GM23248 (cell line): ENCODE measurements at regions of chr11 and their contacts with region 1.

Region 1: DNA sequence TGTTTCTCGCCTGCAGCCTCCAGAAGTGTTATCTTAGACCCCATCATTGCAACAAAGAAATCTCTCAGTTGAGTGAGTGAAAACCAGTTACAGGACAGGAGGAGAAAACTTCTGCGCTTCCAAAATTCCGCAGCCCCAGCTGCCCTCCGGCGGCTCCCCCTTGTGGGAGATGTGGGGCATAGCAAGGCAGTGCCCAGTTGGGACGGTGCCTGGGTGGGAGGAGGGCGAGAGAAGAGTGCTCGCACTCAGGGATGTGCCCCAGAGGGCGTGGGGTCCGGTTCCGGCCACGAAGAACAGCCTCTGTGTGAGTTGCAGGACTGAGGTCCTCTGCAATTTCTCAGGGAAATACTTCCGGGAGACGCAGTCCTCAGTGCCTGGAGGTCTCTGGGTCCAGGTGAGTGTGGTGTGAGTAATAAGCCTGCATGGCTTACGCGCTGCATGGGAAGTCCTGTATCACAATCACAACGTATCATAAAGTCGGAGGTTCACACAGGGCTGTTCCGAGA is 87.0 kb upstream of the BLID start:
- DNase-seq: peak; percentile 90
- H3K4me3 ChIP-seq: peak overlapping the region; percentile 80
- H3K27ac ChIP-seq: peak overlapping the region; percentile 89
- H3K4me1 ChIP-seq: peaks cover 76% of the 10 kb centered on the region
- H3K27me3 ChIP-seq: no peaks in the 10 kb centered on the region

Region 2: DNA sequence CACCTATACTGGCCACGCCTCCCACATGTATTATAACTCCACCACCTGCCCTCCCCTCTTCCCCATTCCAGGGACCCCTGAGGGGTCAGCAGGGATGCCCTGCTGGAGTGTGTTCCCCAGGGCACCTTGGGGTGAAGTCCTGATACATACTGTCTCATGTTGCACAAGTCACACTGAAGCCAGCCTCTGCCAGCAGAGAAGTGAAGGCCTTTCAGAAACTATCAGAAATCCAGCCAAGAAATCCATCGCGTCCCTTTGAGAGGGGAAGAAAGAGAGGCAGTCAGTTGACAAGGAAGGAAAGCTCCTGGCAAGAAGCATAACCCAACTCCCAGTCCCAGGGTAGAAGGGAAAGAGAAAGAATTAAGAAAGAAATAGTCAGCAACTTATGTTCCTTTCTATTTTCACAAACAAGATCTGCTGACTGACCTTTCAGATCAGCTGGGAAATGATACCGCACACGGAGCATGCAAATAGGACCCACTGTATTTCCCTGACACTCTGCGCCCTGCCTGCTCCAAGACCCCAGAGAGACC is 865.2 kb before region 1 on chr11:
- in situ Hi-C with region 1: no loop called
- DNase-seq: no peak
- H3K4me3 ChIP-seq: no peak overlapping the region
- H3K27ac ChIP-seq: no peak overlapping the region
- H3K4me1 ChIP-seq: no peaks in the 10 kb centered on the region
- H3K27me3 ChIP-seq: peaks cover 50% of the 10 kb centered on the region

Region 3: GRCh38 chr11:121655537-121656327 is 547.3 kb before region 1 on chr11:
- in situ Hi-C with region 1: loop called (anchors 10 kb)
- DNase-seq: peak; percentile 99
- H3K4me3 ChIP-seq: peak overlapping the region; percentile 68
- H3K27ac ChIP-seq: peak overlapping the region; percentile 97
- H3K4me1 ChIP-seq: peaks cover 38% of the 10 kb centered on the region
- H3K27me3 ChIP-seq: no peaks in the 10 kb centered on the region

Region 4: GRCh38 chr11:122020902-122021301 is 182.1 kb before region 1 on chr11:
- in situ Hi-C with region 1: loop called (anchors 10 kb)
- DNase-seq: peak; percentile 35
- H3K4me3 ChIP-seq: no peak overlapping the region
- H3K27ac ChIP-seq: 0 out of 2 replicates have a peak overlapping the region, but pooled peaks have one; percentile 9
- H3K4me1 ChIP-seq: 0 out of 2 replicates have a peak, but pooled peaks cover 19% of the 10 kb centered on the region
- H3K27me3 ChIP-seq: no peaks in the 10 kb centered on the region

Region 5: DNA sequence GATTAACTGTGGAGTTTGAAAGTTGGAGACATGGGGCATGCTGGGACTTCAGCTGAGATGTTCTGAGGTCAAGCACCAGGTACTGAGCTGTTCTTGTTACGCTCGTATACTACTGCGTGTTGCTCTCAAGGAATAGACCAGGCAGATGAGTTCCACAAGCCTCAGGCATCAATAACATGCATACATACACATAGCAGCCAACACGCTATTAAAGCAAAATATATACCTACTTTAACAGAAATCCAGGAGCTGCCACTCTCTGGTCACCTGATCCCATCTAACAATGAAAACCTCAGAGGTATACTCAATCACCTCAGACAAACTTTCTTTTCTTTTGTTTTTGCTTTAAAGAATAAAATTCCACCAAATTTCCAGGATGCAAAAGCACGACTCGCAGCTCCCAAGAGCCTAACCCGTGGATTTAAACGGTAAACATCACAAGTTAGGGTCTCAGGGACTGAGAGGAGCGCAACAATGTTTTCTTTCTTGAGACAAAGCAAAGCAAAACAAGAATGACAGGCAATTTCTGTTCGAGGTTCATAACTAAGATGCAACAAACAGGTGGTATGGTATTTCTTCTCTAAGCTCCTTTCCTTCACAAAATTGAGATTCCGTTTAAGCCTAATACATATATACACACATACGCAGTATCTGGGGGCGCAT is 103.5 kb before region 1 on chr11:
- in situ Hi-C with region 1: loop called (anchors 5 kb)
- DNase-seq: peak; percentile 74
- H3K4me3 ChIP-seq: peak overlapping the region; percentile 99
- H3K27ac ChIP-seq: peak overlapping the region; percentile 93
- H3K4me1 ChIP-seq: peaks cover 48% of the 10 kb centered on the region
- H3K27me3 ChIP-seq: no peaks in the 10 kb centered on the region